PC-9 (cell line): ENCODE measurements at regions of chr1 and their contacts with region 1.

Region 1: DNA sequence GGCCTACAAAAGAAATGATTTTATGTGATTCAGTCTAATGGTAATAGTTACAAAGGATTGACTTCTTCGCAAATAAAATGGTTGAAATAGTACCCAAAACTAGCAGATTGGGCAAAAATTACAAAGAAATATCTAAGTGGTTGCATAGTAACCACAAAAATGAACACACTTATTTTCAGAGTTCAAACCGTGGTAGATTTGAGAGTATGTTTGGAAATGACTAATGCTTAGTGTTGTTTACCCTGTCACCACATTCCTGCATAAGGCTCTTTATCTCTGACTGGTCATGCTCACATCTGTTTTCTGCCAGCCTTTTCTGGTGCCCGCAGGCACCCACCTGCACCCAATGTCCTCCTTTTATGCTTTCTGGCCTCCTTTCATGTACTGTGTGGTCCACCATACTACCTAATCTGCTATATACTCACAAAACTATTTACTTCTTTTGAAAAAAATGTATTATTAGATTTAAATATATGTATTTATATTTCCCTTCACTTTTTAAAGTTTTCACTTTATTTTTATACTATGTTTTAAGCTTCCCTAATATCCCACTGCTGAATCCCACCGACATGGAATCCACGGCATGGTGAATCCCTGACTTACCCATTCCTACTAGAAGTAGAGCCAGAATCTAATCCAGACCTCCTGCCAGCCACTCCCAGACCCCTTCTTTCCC is 30.3 kb downstream of the PTPRC start:
- DNase-seq: peak; percentile 63 to 82
- H3K4me3 ChIP-seq: no peak overlapping the region
- H3K27ac ChIP-seq: peak overlapping the region; percentile 36
- H3K4me1 ChIP-seq: peaks cover 25% of the 10 kb centered on the region
- H3K27me3 ChIP-seq: no peaks in the 10 kb centered on the region
- CTCF ChIP-seq: no peak

Region 2: DNA sequence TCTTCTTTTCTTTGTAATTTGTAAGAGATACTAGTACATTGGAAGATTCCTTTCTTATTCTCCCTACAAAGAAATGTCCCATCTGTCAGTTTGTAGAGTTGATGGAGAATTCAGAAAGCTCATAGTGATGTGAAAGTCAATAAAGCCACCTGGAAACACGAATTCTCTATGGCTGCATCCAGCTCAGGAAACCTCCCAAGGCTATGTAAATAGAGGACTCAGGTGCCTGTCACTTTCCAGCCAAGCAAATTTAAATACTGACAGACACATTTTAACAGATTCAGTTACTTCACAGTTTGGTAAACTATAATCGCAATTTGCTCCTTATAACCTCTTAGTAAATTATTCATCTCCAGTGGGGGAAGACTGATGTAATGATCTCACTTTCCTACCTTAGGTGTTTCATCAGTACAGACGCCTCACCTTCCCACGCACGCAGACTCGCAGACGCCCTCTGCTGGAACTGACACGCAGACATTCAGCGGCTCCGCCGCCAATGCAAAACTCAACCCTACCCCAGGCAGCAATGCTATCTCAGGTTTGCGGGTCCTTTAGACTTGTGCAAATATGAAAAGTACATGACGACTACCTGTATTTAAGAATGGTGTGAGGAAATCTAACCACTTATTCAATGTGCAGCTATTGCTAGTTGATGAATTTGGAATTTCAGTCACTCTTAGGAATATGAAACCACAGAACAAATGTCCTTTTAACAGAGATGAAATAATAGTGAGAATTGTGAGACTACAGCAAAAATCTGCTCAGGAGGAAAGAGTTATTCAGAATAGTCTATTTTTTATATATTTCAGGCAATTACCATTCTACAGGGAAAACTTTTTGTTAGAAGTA is 30.2 kb after region 1 on chr1:
- CTCF ChIA-PET with region 1: no interaction called
- POLR2A ChIA-PET with region 1: no interaction called
- intact Hi-C with region 1: loop called (anchors 1 kb)
- DNase-seq: peak in 1 of 2 experiments; percentile 42
- H3K4me3 ChIP-seq: no peak overlapping the region
- H3K27ac ChIP-seq: no peak overlapping the region
- H3K4me1 ChIP-seq: no peaks in the 10 kb centered on the region
- H3K27me3 ChIP-seq: no peaks in the 10 kb centered on the region
- CTCF ChIP-seq: peak; percentile 62